ENCODE measurements at regions of chr6 and their contacts with region 1.

Region 1: DNA sequence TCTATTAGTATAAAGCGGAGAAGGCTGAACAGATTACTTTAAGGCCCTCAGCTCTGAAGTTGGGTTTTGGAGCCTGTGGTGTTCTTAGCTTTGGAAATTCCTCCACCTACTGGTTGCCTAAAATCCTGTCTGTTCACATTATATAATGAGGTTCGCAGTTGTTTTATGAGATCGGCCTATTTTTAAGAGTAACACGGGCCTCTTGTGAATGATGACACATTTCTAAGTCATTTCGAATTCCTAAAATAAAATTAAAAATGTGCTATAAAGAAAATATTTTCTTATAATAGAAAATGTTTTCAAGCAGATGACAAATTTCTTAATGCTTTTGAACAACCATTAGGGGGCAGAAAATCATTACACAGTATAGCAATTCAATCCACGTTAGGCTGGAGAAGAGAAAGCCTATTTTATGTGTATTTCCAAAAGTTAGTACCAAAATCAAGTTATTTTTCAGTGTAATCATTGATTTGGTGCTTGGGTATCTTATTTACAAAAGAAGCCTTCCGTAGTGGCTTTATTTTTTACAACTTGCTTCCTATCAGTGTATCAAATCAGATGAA is 15.8 kb upstream of the FAM8A1 start:
- DNase-seq: no peak
- ATAC-seq: peak; percentile 74
- H3K4me3 ChIP-seq: peak overlapping the region; percentile 4
- H3K27ac ChIP-seq: peak overlapping the region; percentile 70
- H3K4me1 ChIP-seq: peaks cover 7% of the 10 kb centered on the region
- H3K27me3 ChIP-seq: no peaks in the 10 kb centered on the region
- CTCF ChIP-seq: peak; percentile 78

Region 2: GRCh38 chr6:17156112-17156921 is 428.0 kb before region 1 on chr6:
- intact Hi-C with region 1: loop called (anchors 5 kb)
- DNase-seq: no peak
- ATAC-seq: peak; percentile 82
- H3K4me3 ChIP-seq: no peak overlapping the region
- H3K27ac ChIP-seq: no peak overlapping the region
- H3K4me1 ChIP-seq: no peaks in the 10 kb centered on the region
- H3K27me3 ChIP-seq: no peaks in the 10 kb centered on the region
- CTCF ChIP-seq: peak; percentile 87

Region 3: GRCh38 chr6:17714879-17715851 is 130.8 kb after region 1 on chr6:
- intact Hi-C with region 1: no loop called
- DNase-seq: no peak
- ATAC-seq: peak; percentile 45
- H3K4me3 ChIP-seq: no peak overlapping the region
- H3K27ac ChIP-seq: no peak overlapping the region
- H3K4me1 ChIP-seq: no peaks in the 10 kb centered on the region
- H3K27me3 ChIP-seq: no peaks in the 10 kb centered on the region
- CTCF ChIP-seq: no peak